ENCODE measurements at regions of chr5 and their contacts with region 1.

Region 1: GRCh38 chr5:56838409-56839039 is 23.2 kb downstream of the MAP3K1 start:
- DNase-seq: no peak
- ATAC-seq: peak; percentile 52; the same call in 1 of the 2 replicates
- H3K4me3 Mint-ChIP-seq: no peak overlapping the region
- H3K27ac Mint-ChIP-seq: peak overlapping the region; percentile 4; the same call in 1 of the 2 replicates
- H3K4me1 Mint-ChIP-seq: peaks cover 56% of the 10 kb centered on the region
- H3K27me3 Mint-ChIP-seq: no peaks in the 10 kb centered on the region
- CTCF ChIP-seq: no peak

Region 2: GRCh38 chr5:56264417-56265025 is 574.0 kb before region 1 on chr5:
- CTCF ChIA-PET with region 1: interaction called, 94 read pairs
- POLR2A ChIA-PET with region 1: no interaction called
- DNase-seq: peak; percentile 65
- ATAC-seq: peak; percentile 100
- H3K4me3 Mint-ChIP-seq: no peak overlapping the region
- H3K27ac Mint-ChIP-seq: no peak overlapping the region
- H3K4me1 Mint-ChIP-seq: peaks cover 5% of the 10 kb centered on the region; the same call in 1 of the 2 replicates
- H3K27me3 Mint-ChIP-seq: no peaks in the 10 kb centered on the region
- CTCF ChIP-seq: peak; percentile 63

Region 3: DNA sequence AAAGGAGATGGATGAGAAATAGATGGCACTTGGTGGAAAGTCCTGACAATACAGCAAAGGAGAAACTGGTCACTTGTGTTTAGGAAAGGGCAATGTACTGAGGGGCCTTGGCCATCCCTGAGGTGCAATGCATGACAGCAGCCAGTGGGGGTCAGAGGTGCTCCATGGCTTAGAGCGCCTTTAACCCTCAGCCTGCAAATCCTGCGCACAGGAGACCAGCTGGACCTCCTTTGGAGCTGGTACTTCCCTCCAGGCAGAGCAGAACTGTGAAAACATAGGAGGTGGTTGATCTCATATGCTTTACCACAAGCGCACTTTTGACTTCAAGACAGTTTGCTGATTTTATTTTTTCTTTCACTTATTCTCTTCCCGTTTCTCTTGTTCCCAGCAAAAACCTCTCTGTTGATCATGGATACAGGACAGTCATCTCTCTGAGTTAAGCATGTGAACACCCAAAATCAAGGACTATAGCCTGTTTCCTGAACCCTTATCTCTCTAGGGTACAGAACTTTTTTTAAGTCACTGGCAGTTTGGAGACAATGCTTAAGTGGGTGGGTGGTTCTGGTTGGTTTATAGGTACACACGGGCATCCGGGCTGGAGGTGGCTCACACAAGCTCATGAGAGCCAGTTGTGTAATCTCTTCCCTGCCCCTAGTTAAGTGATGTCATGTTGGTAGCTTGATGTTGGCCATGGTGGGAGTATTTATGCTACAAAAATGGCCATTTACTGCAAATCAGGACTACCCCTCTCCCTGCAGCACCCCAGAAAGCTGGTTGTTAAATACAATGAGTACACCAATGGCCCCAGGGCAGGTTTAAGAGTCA is 567.7 kb before region 1 on chr5:
- CTCF ChIA-PET with region 1: interaction called, 94 read pairs
- POLR2A ChIA-PET with region 1: interaction called, 4 read pairs
- DNase-seq: peak; percentile 84
- ATAC-seq: peak; percentile 99
- H3K4me3 Mint-ChIP-seq: no peak overlapping the region
- H3K27ac Mint-ChIP-seq: no peak overlapping the region
- H3K4me1 Mint-ChIP-seq: peaks cover 7% of the 10 kb centered on the region
- H3K27me3 Mint-ChIP-seq: no peaks in the 10 kb centered on the region
- CTCF ChIP-seq: peak; percentile 94

Region 4: GRCh38 chr5:56480705-56481427 is 357.7 kb before region 1 on chr5:
- CTCF ChIA-PET with region 1: interaction called, 10 read pairs
- POLR2A ChIA-PET with region 1: no interaction called
- DNase-seq: peak; percentile 56
- ATAC-seq: peak; percentile 54
- H3K4me3 Mint-ChIP-seq: peak overlapping the region; percentile 77
- H3K27ac Mint-ChIP-seq: no peak overlapping the region
- H3K4me1 Mint-ChIP-seq: peaks cover 24% of the 10 kb centered on the region
- H3K27me3 Mint-ChIP-seq: peaks cover 45% of the 10 kb centered on the region
- CTCF ChIP-seq: no peak

Region 5: DNA sequence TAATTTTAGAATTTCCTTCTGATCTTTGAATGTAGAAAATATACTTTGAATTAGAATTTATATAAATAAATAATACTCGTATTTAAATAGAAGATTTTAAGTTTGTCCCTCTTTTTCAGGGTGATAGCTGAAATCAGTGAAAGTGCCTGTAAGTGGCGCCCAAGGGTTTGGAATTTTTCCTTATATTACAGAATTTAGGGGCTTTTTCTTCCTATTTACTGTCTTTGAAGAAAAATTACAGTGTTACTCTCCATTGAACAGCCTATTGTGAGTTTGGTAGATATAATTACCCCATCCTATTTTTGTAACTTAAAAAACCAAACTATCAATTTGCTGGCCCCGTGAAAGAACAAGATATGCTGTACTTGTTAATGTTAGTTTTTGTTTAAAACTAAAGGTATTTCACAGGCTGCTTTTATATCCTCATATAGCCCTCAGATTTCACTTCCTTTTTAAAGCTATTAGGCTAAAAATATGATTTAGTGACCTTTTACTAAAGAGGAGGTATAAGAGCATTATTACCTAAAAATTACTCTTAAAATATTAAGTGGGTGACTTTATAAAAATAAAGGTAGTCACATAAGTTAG is 20.0 kb before region 1 on chr5:
- CTCF ChIA-PET with region 1: interaction called, 18 read pairs
- POLR2A ChIA-PET with region 1: interaction called, 3 read pairs
- DNase-seq: no peak
- ATAC-seq: no peak
- H3K4me3 Mint-ChIP-seq: no peak overlapping the region
- H3K27ac Mint-ChIP-seq: no peak overlapping the region
- H3K4me1 Mint-ChIP-seq: peaks cover 53% of the 10 kb centered on the region
- H3K27me3 Mint-ChIP-seq: peaks cover 4% of the 10 kb centered on the region
- CTCF ChIP-seq: no peak

Region 6: GRCh38 chr5:56827049-56827448 is 11.5 kb before region 1 on chr5:
- CTCF ChIA-PET with region 1: interaction called, 30 read pairs
- POLR2A ChIA-PET with region 1: interaction called, 3 read pairs
- DNase-seq: peak; percentile 41
- ATAC-seq: peak; percentile 88
- H3K4me3 Mint-ChIP-seq: no peak overlapping the region
- H3K27ac Mint-ChIP-seq: 0 out of 2 replicates have a peak overlapping the region, but pooled peaks have one; percentile 5
- H3K4me1 Mint-ChIP-seq: peaks cover 78% of the 10 kb centered on the region
- H3K27me3 Mint-ChIP-seq: no peaks in the 10 kb centered on the region
- CTCF ChIP-seq: no peak